Left ventricle myocardium superior (tissue), 1 donor: ENCODE measurements at regions of chr13 and their contacts with region 1.

Region 1: GRCh38 chr13:71797517-71797916 is 69.5 kb downstream of the DACH1 start:
- DNase-seq: no peak
- ATAC-seq: no peak

Region 2: GRCh38 chr13:71851498-71852409 is 54.2 kb after region 1 on chr13:
- intact Hi-C with region 1: loop called (anchors 10 kb)
- DNase-seq: no peak
- ATAC-seq: no peak

Region 3: DNA sequence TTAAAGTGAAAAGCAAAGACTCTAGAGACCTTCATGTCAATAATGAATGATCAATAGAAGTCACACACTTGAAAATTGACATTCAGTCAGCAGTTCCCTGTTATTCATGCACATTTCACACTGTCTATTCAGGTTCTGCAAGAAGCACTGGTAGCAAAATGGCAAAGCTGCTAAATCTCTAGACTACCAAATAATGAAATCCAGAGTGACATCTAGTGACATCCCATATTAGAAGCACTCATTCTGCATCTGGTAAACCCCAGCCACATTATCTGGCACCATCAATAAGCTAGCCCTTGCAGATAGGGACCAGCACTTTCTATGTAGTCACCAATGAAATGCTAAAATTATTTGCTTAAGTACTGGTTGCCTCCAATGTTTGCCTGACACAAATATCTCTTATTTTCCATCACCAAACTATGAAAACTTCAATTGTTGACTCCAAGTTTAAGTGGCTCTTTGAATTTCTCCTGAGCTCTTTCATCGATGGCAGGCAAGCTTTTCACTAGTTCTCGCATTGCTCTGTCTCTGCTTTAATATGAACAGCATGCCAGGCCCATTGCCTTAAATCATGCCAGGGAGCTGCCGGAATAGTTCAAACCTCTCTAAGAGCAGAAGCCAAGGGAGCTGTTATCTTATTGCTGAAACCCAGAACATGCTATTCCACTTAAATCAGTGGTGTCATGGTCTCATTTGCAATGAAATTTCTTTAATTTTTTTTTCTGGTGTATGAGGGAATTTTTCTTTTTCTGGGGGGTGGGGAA is 520.0 kb after region 1 on chr13:
- intact Hi-C with region 1: no loop called
- DNase-seq: no peak
- ATAC-seq: no peak